Dendritic cell treated with granulocyte-macrophage colony-stimulating factor and Interleukin-4, amounts not matched to agents 40 ng/mL and 50 ng/mL, for 4 days (primary cell): ENCODE measurements at regions of chr3 and their contacts with region 1.

Region 1: DNA sequence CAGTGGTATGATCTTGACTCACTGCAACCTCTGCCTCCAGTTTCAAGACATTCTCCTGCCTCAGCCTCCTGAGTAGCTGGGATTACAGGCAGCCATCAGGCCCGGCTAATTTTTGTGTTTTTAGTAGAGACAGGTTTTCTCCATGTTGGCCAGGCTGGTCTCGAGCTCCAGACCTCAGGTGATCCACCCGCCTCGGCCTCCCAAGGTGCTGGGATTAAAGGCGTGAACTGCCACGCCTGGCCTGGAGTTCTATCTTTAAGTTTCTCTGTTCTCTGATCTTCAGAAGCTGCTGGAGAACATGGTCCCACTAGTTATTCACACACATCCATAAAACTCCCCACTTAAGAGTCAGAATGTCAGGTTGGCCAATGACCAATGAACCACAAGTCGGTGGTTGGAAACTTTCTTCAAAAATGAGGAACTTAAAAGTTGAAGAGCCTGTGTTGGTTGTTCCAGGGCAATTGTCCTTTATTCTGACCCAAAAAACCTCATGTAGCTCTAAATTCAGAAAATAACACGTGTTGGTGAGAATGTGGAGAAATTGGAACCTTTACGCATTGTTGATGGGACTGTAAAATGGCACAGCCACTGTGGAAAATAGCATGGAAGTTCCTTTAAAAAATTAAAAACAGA is 55.9 kb upstream of the PIK3CB start:
- H3K4me3 Mint-ChIP-seq: no peak overlapping the region
- H3K27ac Mint-ChIP-seq: peak overlapping the region; percentile 92
- H3K4me1 Mint-ChIP-seq: peaks cover 34% of the 10 kb centered on the region
- H3K27me3 Mint-ChIP-seq: no peaks in the 10 kb centered on the region

Region 2: GRCh38 chr3:138862924-138863775 is 27.5 kb before region 1 on chr3:
- intact Hi-C with region 1: loop called (anchors 1 kb)
- H3K4me3 Mint-ChIP-seq: peak overlapping the region; percentile 53
- H3K27ac Mint-ChIP-seq: peak overlapping the region; percentile 85
- H3K4me1 Mint-ChIP-seq: peaks cover 41% of the 10 kb centered on the region
- H3K27me3 Mint-ChIP-seq: no peaks in the 10 kb centered on the region

Region 3: DNA sequence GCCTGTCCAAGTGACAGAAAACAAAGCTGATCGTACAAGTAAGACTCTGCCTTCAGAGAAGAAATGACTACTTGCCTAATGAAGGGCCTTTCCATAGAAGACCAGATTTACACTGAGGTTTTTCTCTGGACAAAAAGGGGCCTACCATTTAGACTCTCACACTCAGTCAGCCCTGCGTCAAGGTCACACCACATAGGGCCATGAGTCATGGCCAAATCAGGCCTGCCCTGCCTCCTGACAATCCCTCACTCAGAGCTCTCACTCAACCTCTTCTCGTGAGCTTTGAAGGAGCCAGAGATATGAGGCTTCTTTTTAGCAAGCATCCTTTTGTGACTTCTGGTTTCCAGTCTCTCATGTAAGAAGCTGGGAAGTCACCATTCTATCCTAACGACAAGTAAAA is 855.2 kb after region 1 on chr3:
- intact Hi-C with region 1: no loop called
- H3K4me3 Mint-ChIP-seq: no peak overlapping the region
- H3K27ac Mint-ChIP-seq: no peak overlapping the region
- H3K4me1 Mint-ChIP-seq: no peaks in the 10 kb centered on the region
- H3K27me3 Mint-ChIP-seq: peaks cover 8% of the 10 kb centered on the region